GM13977 (cell line): ENCODE measurements at regions of chr13 and their contacts with region 1.

Region 1: GRCh38 chr13:101757446-101758039 is 305.1 kb downstream of the ITGBL1 start:
- DNase-seq: peak; percentile 36
- CTCF ChIP-seq: peak; percentile 46

Region 2: GRCh38 chr13:101127741-101128353 is 629.7 kb before region 1 on chr13:
- in situ Hi-C with region 1: loop called (anchors 25 kb)
- DNase-seq: peak; percentile 45
- CTCF ChIP-seq: peak; percentile 83

Region 3: DNA sequence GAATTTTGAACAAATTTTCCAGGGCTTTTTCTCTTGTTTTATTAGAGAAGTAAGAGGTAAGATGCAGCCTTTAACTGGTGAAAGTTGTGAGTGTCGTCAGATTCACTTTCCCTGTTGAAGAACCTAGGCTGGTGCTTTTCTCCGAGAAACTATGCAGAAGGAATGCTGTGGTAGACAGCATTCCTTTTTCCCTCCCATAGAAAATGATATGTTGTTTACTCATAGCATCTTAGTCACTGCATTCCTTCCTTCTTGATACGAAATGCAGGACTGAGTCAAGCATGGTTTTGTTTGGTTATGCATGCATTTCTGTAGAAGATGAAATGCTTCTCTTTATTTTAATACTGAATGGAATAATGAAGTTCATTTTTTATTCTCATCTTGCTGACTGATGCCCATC is 301.7 kb before region 1 on chr13:
- in situ Hi-C with region 1: no loop called
- DNase-seq: no peak
- CTCF ChIP-seq: no peak

Region 4: DNA sequence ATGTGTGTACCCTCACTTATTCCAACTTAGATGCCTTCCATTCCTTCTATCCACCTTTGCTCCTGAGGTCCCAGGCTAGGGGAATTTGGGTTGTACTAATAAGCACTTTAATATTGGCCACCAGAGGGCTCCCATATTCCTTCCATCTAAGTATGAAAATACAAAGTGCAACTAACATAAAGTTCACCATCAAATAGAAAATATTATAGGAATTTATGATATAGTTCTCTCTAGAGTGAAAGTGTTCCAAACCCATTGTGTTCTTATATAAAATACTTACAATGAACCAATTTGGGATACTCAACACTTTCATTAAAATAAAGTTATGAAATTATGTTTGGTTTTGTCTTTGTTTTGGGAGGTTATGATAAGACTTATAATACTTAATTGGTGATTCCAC is 242.8 kb before region 1 on chr13:
- in situ Hi-C with region 1: loop called (anchors 25 kb)
- DNase-seq: peak; percentile 9
- CTCF ChIP-seq: peak; percentile 61